ENCODE measurements at regions of chr3 and their contacts with region 1.

Region 1: GRCh38 chr3:32391643-32392535 is at the start of gene CMTM7:
- DNase-seq: peak; percentile 37
- ATAC-seq: peak; percentile 88
- H3K4me3 ChIP-seq: peak within 1 kb of the TSS; percentile 74 to 89
- H3K27ac ChIP-seq: peak within 1 kb of the TSS; percentile 92
- H3K4me1 ChIP-seq: peaks cover 13 to 42% of the 10 kb centered on the region in 2 experiments
- H3K27me3 ChIP-seq: no peaks in the 10 kb centered on the region
- CTCF ChIP-seq: no peak
- POLR2A ChIP-seq: peak; percentile 86
- RAD21 ChIP-seq: no peak; the same call in 1 of the 2 replicates
- total RNA-seq, gene CMTM7: 62.6 TPM

Region 2: DNA sequence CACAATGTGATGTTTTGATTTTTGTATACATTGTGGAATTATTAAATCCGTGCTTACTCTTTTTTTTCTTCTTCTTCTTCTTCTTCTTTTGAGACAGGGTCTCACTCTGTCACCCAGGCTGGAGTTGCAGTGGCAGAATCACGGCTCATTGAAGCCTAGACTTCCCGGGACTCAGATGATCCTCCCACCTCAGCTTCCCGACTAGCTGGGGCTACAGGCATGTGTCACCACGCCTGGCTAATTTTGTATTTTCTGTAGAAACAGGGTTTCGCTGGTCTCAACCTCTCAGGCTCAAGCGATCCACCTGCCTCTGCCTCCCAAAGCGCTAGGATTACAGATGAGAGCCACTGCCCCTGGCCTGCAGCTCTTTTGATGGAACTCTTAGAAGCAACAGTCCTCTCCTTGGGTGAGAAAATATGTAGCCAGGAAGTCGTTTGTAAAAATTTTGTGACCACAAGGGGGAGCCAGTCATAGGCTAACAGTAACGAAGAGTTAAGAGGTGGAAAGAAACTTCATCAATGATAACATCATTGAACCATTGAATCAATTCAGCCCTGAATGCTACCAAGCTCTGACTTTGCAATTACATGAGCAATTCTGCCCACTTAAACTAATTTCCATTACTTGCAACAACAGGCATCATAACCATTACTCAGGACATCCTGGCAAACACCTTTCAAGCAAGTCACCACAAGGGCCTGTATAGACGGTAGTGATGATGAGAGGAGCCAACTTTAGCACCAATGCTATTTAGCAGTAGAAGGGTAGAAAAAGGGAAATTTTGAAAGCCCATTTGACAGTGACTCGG is 16.9 kb before region 1 on chr3:
- CTCF ChIA-PET with region 1: interaction called, 20 read pairs
- POLR2A ChIA-PET with region 1: interaction called, 3 read pairs
- RAD21 ChIA-PET with region 1: no interaction called
- intact Hi-C with region 1: no loop called
- DNase-seq: peak; percentile 63
- ATAC-seq: peak; percentile 87
- H3K4me3 ChIP-seq: no peak overlapping the region
- H3K27ac ChIP-seq: no peak overlapping the region
- H3K4me1 ChIP-seq: peaks cover 0 to 4% of the 10 kb centered on the region in 2 experiments; a peak in 1 of 4 replicates
- H3K27me3 ChIP-seq: no peaks in the 10 kb centered on the region
- CTCF ChIP-seq: peak; percentile 56 to 79 (median 78)
- POLR2A ChIP-seq: no peak
- RAD21 ChIP-seq: peak; percentile 72

Region 3: DNA sequence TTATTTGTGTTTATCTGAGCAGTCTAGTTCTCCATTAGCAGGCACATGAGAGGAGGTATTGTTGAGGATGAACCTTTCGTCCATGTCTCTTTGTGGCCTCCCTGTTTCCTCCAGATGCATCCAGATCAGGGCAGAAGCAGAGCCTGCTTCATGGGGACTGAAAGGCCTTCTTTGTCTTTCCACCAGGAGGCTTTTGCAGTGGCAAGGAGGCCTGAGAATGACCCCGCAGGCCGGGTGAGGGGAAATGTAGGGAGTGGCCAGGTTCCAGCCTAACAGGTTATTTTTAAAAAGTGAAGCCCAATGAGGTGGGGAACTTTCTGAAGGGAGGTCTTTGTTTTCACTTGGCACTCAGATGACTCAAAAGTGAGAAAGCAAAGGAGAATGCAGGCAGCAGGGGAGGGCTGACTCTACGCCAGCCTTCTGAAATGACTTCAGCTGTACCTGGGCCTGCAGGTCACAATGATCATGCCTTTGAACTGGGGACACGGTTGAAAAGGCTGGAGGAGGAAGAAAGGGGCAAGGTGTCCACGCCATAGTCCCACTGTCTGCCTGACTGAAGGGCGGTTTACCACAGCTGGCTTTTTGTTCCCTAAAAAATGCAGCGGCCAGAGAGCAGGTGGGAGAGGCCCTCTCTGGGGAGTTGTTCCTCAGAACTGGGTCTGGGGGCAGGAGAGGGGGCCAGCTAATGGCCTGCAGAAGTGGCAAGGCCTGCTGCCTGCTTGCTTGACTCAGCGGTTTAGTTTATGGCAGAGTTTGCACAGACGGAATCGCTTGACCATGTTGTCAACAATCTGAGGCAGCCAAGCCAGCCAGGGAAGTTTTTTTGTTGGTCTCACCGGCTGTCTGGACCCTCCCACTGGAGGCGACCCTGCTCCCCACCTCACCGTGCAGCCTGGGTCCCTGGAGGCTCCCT is 28.5 kb after region 1 on chr3:
- CTCF ChIA-PET with region 1: no interaction called
- POLR2A ChIA-PET with region 1: interaction called, 4 read pairs
- RAD21 ChIA-PET with region 1: no interaction called
- intact Hi-C with region 1: loop called (anchors 2 kb)
- DNase-seq: peak; percentile 97
- ATAC-seq: peak; percentile 82
- H3K4me3 ChIP-seq: peak overlapping the region; percentile 37 to 51
- H3K27ac ChIP-seq: peak overlapping the region; percentile 97
- H3K4me1 ChIP-seq: peaks cover 73 to 96% of the 10 kb centered on the region in 2 experiments
- H3K27me3 ChIP-seq: no peaks in the 10 kb centered on the region
- CTCF ChIP-seq: peak in 2 of 3 experiments; percentile 42 to 52; a peak in 4 of 6 replicates
- POLR2A ChIP-seq: no peak
- RAD21 ChIP-seq: no peak

Region 4: DNA sequence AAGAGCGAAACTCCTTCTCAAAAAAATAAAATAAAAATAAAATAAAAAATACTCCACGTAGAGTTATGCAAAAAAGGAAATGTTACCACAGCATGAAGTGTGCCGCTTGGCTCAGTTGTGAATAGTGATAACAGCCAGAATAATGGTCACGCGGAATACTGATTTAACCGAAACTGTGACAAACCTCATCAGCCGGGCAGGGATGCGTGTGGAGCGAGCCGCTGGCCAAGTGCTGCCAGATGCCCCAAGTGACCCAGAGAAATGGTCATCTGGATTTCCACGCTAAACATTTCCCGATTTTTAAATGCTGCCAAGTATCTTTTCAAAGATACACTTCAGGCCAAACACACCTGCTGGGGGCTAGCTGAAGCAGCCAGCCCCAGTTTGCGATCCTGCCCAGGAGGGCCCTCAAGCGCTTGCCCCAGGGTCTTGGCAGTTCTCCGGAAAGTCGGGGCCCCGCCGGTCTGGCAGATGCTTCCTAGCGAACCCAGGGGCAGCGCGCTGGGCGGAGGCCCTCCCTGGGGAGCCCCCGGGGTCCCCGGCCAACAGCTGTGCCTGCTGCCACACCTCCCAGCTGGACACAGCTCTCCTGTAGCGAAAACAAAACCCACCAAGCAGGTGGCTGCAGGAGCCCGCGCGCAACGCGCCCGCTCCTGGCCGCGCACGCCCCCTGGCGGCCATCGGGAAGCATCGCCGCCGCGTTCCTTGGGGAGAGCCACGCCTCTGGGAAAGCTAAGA is 75.6 kb after region 1 on chr3:
- CTCF ChIA-PET with region 1: interaction called, 4 read pairs
- POLR2A ChIA-PET with region 1: no interaction called
- RAD21 ChIA-PET with region 1: no interaction called
- intact Hi-C with region 1: loop called (anchors 5 kb)
- DNase-seq: no peak
- ATAC-seq: peak; percentile 66
- H3K4me3 ChIP-seq: no peak overlapping the region
- H3K27ac ChIP-seq: peak overlapping the region; percentile 24; the same call in 1 of the 2 replicates
- H3K4me1 ChIP-seq: peaks cover 39 to 53% of the 10 kb centered on the region in 2 experiments
- H3K27me3 ChIP-seq: no peaks in the 10 kb centered on the region
- CTCF ChIP-seq: peak; percentile 86 to 98 (median 91)
- POLR2A ChIP-seq: no peak
- RAD21 ChIP-seq: peak; percentile 96

Region 5: DNA sequence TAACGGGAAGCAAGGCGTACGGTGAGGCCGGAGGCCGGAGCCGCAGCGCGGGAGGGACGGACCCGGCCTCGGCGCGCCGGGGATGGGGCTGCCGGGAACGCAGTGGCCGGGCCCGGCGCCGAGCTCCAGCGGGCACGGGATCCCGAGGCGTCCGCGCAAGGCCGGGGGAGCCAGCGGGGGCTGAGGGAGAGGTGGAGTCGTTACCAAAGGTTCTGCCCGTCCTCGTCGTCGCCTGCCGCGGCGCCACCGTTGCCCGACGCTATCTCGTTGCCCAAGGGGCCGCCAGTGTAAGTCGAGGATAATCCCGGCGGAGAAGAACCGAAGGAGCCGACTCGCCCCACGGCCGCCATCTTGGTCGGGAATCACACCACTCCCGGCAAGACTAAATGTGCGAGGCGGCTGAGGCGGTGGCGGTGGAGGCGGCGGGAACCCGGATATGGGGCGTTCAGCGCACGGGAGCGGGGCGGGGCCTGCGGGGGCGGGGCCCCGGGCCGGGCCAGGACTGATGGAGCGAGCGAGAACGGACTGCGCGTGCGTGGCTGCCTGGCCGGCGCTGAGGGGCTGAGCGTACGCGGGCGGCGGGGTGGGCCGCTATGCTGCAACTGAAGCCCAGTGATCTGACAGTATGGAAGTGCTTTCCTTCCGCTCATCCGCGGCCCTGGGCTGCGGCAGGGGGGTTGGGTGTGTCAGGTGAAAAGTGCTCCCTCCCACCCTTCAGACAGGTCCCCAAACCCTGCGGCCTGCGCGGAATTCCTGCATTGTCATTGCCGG is 178.7 kb after region 1 on chr3 and contains the start of gene DYNC1LI1:
- CTCF ChIA-PET with region 1: no interaction called
- POLR2A ChIA-PET with region 1: no interaction called
- RAD21 ChIA-PET with region 1: no interaction called
- intact Hi-C with region 1: loop called (anchors 5 kb)
- DNase-seq: peak; percentile 82
- ATAC-seq: peak; percentile 92
- H3K4me3 ChIP-seq: peak within 1 kb of the TSS; percentile 79 to 87
- H3K27ac ChIP-seq: peak within 1 kb of the TSS; percentile 97
- H3K4me1 ChIP-seq: peaks cover 7 to 20% of the 10 kb centered on the region in 2 experiments; a peak in 3 of 4 replicates
- H3K27me3 ChIP-seq: no peaks in the 10 kb centered on the region
- CTCF ChIP-seq: no peak
- POLR2A ChIP-seq: peak; percentile 83
- RAD21 ChIP-seq: no peak
- total RNA-seq, gene DYNC1LI1: 39.4 TPM